ENCODE measurements at regions of chr3 and their contacts with region 1.

Region 1: GRCh38 chr3:81490541-81491288 is 270.7 kb downstream of the GBE1 start:
- DNase-seq: peak; percentile 85
- H3K4me3 ChIP-seq: no peak overlapping the region
- H3K4me3 Mint-ChIP-seq: peak overlapping the region; percentile 69
- H3K27ac Mint-ChIP-seq: peak overlapping the region; percentile 94
- H3K4me1 ChIP-seq: peaks cover 11% of the 10 kb centered on the region
- H3K4me1 Mint-ChIP-seq: peaks cover 9% of the 10 kb centered on the region
- H3K27me3 ChIP-seq: no peaks in the 10 kb centered on the region
- H3K27me3 Mint-ChIP-seq: no peaks in the 10 kb centered on the region
- CTCF ChIP-seq: peak; percentile 74 to 75

Region 2: DNA sequence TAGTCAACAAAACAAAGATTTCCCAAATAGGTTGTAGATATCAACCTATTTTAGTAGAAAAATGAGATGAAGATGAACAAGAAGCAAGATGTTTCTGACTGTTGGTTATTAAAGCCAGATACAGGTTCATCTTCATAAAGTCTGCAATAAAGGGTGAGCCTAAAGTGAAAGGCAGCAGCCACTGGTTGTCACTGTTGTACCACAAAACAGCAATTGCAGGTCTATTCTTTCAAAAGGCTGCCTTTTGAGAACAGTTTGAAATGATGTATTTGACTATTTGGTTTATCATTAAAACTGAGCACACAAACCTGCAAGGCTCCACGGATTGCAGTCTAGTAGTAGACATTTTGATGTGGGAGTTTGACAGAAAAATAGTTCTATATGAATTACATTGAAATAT is 272.7 kb before region 1 on chr3:
- CTCF ChIA-PET with region 1: no interaction called
- POLR2A ChIA-PET with region 1: no interaction called
- intact Hi-C with region 1: loop called (anchors 1 kb)
- DNase-seq: peak; percentile 46 to 60
- H3K4me3 ChIP-seq: no peak overlapping the region
- H3K4me3 Mint-ChIP-seq: no peak overlapping the region
- H3K27ac Mint-ChIP-seq: no peak overlapping the region
- H3K4me1 ChIP-seq: peaks cover 12% of the 10 kb centered on the region
- H3K4me1 Mint-ChIP-seq: peaks cover 14% of the 10 kb centered on the region
- H3K27me3 ChIP-seq: no peaks in the 10 kb centered on the region
- H3K27me3 Mint-ChIP-seq: no peaks in the 10 kb centered on the region
- CTCF ChIP-seq: peak; percentile 48 to 87

Region 3: GRCh38 chr3:81315030-81315429 is 175.7 kb before region 1 on chr3:
- CTCF ChIA-PET with region 1: no interaction called
- POLR2A ChIA-PET with region 1: no interaction called
- intact Hi-C with region 1: no loop called
- DNase-seq: no peak
- H3K4me3 ChIP-seq: no peak overlapping the region
- H3K4me3 Mint-ChIP-seq: no peak overlapping the region
- H3K27ac Mint-ChIP-seq: no peak overlapping the region
- H3K4me1 ChIP-seq: no peaks in the 10 kb centered on the region
- H3K4me1 Mint-ChIP-seq: no peaks in the 10 kb centered on the region
- H3K27me3 ChIP-seq: no peaks in the 10 kb centered on the region
- H3K27me3 Mint-ChIP-seq: no peaks in the 10 kb centered on the region
- CTCF ChIP-seq: no peak

Region 4: DNA sequence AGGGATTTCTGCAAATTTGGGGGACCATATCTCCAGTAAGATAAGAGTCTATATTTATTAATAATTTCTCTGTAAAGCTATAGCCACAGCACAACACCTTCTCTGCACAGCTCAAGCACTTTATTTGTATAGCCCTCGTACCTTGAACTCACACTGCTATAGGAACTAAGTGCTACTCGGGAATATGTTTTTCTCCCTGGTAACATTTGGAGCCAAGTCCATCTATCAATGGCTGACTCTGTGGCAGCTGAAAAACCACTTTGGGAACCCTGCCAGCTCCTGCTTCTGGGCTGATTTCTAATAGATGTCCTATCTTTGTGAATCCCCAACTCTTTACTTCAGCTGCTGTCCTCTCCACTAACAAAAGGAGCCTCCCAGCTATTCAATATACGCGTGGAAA is 27.8 kb before region 1 on chr3:
- CTCF ChIA-PET with region 1: no interaction called
- POLR2A ChIA-PET with region 1: no interaction called
- intact Hi-C with region 1: no loop called
- DNase-seq: no peak
- H3K4me3 ChIP-seq: no peak overlapping the region
- H3K4me3 Mint-ChIP-seq: no peak overlapping the region
- H3K27ac Mint-ChIP-seq: no peak overlapping the region
- H3K4me1 ChIP-seq: no peaks in the 10 kb centered on the region
- H3K4me1 Mint-ChIP-seq: no peaks in the 10 kb centered on the region
- H3K27me3 ChIP-seq: no peaks in the 10 kb centered on the region
- H3K27me3 Mint-ChIP-seq: no peaks in the 10 kb centered on the region
- CTCF ChIP-seq: no peak

Region 5: GRCh38 chr3:81554388-81554787 is 63.7 kb after region 1 on chr3:
- CTCF ChIA-PET with region 1: no interaction called
- POLR2A ChIA-PET with region 1: no interaction called
- intact Hi-C with region 1: loop called (anchors 2 kb)
- DNase-seq: no peak
- H3K4me3 ChIP-seq: no peak overlapping the region
- H3K4me3 Mint-ChIP-seq: no peak overlapping the region
- H3K27ac Mint-ChIP-seq: no peak overlapping the region
- H3K4me1 ChIP-seq: peaks cover 4% of the 10 kb centered on the region; the same call in 1 of the 2 replicates
- H3K4me1 Mint-ChIP-seq: peaks cover 6% of the 10 kb centered on the region
- H3K27me3 ChIP-seq: no peaks in the 10 kb centered on the region
- H3K27me3 Mint-ChIP-seq: no peaks in the 10 kb centered on the region
- CTCF ChIP-seq: no peak

Region 6: GRCh38 chr3:81643721-81644120 is 153.0 kb after region 1 on chr3:
- CTCF ChIA-PET with region 1: interaction called, 13 read pairs
- POLR2A ChIA-PET with region 1: no interaction called
- intact Hi-C with region 1: loop called (anchors 1 kb)
- DNase-seq: peak; percentile 28 to 33
- H3K4me3 ChIP-seq: no peak overlapping the region
- H3K4me3 Mint-ChIP-seq: no peak overlapping the region
- H3K27ac Mint-ChIP-seq: no peak overlapping the region
- H3K4me1 ChIP-seq: no peaks in the 10 kb centered on the region
- H3K4me1 Mint-ChIP-seq: no peaks in the 10 kb centered on the region
- H3K27me3 ChIP-seq: no peaks in the 10 kb centered on the region
- H3K27me3 Mint-ChIP-seq: no peaks in the 10 kb centered on the region
- CTCF ChIP-seq: peak; percentile 37 to 39

Region 7: DNA sequence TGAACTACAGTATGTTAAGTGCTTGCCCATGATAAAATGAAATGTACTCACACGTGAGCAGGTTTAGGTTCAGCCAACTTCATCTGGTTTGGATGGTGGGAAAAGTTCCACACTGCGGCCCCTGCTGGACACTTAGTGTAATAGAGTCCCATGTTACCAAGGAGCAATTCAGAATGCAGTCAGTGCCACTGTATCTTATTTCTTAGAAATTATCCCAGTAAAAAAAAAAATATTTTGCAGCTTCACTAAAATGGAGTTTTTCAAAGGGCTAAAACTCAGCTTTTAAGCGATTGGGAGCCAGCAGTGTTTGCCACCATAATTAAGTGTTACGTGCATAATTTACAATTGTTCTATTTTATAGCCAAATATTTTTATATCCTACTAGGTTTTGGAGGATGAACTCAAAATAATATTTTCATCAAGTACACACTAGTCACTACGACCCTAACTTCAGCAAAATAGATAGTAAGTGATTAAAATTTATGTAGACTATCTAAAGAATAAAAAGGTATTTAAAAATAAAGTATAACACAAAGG is 642.4 kb after region 1 on chr3:
- CTCF ChIA-PET with region 1: no interaction called
- POLR2A ChIA-PET with region 1: no interaction called
- intact Hi-C with region 1: loop called (anchors 5 kb)
- DNase-seq: peak; percentile 40 to 57
- H3K4me3 ChIP-seq: no peak overlapping the region
- H3K4me3 Mint-ChIP-seq: no peak overlapping the region
- H3K27ac Mint-ChIP-seq: no peak overlapping the region
- H3K4me1 ChIP-seq: no peaks in the 10 kb centered on the region
- H3K4me1 Mint-ChIP-seq: no peaks in the 10 kb centered on the region
- H3K27me3 ChIP-seq: no peaks in the 10 kb centered on the region
- H3K27me3 Mint-ChIP-seq: no peaks in the 10 kb centered on the region
- CTCF ChIP-seq: peak; percentile 73 to 81